ENCODE measurements at regions of chr4 and their contacts with region 1.

Region 1: DNA sequence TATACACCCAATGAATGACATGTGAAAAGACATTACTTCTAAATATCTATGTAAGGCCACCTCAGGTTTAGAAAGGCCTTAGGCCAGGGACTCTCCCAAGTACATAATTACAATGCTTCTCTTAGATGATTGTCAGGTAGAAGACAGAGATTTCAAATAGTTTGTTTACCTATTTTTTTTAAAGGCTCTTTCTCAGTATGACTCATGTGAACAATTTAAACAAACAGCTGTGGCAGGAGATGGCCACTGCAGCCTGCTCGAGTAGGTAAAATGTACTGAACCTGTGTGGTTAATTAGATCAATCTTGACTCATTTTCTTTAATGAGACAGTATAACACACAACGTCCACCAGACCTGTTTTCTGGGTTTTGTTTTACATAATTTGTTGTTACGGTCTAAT is 50.2 kb downstream of the LEF1 start:
- DNase-seq: peak; percentile 49
- H3K4me3 Mint-ChIP-seq: peak overlapping the region; percentile 58
- H3K27ac Mint-ChIP-seq: peak overlapping the region; percentile 91
- H3K4me1 Mint-ChIP-seq: peaks cover 91% of the 10 kb centered on the region
- H3K27me3 Mint-ChIP-seq: no peaks in the 10 kb centered on the region

Region 2: DNA sequence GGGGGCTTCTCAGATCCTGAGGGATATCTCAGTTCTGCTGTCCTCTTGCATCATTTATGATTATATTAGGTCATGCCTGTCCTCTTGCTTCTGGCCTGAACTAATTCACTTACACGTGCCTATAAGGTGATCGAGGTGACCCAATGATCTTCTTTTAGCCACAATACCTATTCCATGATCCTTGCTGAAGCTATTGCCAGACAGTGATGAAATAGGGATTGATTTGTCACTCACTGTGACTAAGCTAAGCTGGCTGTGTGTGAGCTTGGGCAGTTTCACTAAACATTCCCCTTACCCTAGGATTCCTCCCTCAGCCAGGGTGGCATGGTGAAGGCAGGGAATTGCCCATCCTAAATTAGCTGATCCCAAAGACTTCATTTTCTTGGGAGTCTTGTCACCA is 109.8 kb before region 1 on chr4:
- CTCF ChIA-PET with region 1: no interaction called
- POLR2A ChIA-PET with region 1: no interaction called
- DNase-seq: no peak
- H3K4me3 Mint-ChIP-seq: no peak overlapping the region
- H3K27ac Mint-ChIP-seq: no peak overlapping the region
- H3K4me1 Mint-ChIP-seq: peaks cover 30% of the 10 kb centered on the region
- H3K27me3 Mint-ChIP-seq: no peaks in the 10 kb centered on the region

Region 3: GRCh38 chr4:108135549-108136209 is 17.2 kb after region 1 on chr4:
- CTCF ChIA-PET with region 1: interaction called, 12 read pairs
- POLR2A ChIA-PET with region 1: interaction called, 7 read pairs
- DNase-seq: no peak
- H3K4me3 Mint-ChIP-seq: peak overlapping the region; percentile 48
- H3K27ac Mint-ChIP-seq: peak overlapping the region; percentile 84
- H3K4me1 Mint-ChIP-seq: peaks cover 86% of the 10 kb centered on the region
- H3K27me3 Mint-ChIP-seq: no peaks in the 10 kb centered on the region